ENCODE measurements at regions of chr11 and their contacts with region 1.

Region 1: GRCh38 chr11:2151500-2152257 is 9.3 kb downstream of the INS start:
- DNase-seq: no peak
- ATAC-seq: peak; percentile 77
- H3K4me3 ChIP-seq: no peak overlapping the region
- H3K27ac ChIP-seq: no peak overlapping the region
- H3K4me1 ChIP-seq: no peaks in the 10 kb centered on the region
- H3K27me3 ChIP-seq: no peaks in the 10 kb centered on the region; a peak in 1 of 4 replicates
- CTCF ChIP-seq: peak; percentile 73 to 82 (median 73)
- EP300 ChIP-seq: no peak
- POLR2A ChIP-seq: no peak
- RAD21 ChIP-seq: peak; percentile 80

Region 2: GRCh38 chr11:1694064-1694845 is 457.4 kb before region 1 on chr11:
- CTCF ChIA-PET with region 1: interaction called, 30 read pairs
- POLR2A ChIA-PET with region 1: no interaction called
- RAD21 ChIA-PET with region 1: interaction called, 23 read pairs
- SMC1A ChIA-PET with region 1: interaction called, 13 read pairs
- in situ Hi-C with region 1: loop called (anchors 5 kb)
- intact Hi-C with region 1: loop called (anchors 2 kb)
- DNase-seq: no peak
- ATAC-seq: peak; percentile 99
- H3K4me3 ChIP-seq: no peak overlapping the region
- H3K27ac ChIP-seq: no peak overlapping the region
- H3K4me1 ChIP-seq: no peaks in the 10 kb centered on the region
- H3K27me3 ChIP-seq: peaks cover 3 to 4% of the 10 kb centered on the region in 2 experiments; a peak in 2 of 4 replicates
- CTCF ChIP-seq: peak; percentile 80 to 94 (median 92); a peak in 5 of 6 replicates
- EP300 ChIP-seq: no peak
- POLR2A ChIP-seq: no peak
- RAD21 ChIP-seq: peak; percentile 89

Region 3: GRCh38 chr11:1832211-1832919 is 319.3 kb before region 1 on chr11:
- CTCF ChIA-PET with region 1: interaction called, 35 read pairs
- POLR2A ChIA-PET with region 1: no interaction called
- RAD21 ChIA-PET with region 1: interaction called, 7 read pairs
- SMC1A ChIA-PET with region 1: interaction called, 8 read pairs
- in situ Hi-C with region 1: no loop called
- intact Hi-C with region 1: loop called (anchors 1 kb)
- DNase-seq: no peak
- ATAC-seq: peak; percentile 81
- H3K4me3 ChIP-seq: no peak overlapping the region
- H3K27ac ChIP-seq: no peak overlapping the region
- H3K4me1 ChIP-seq: no peaks in the 10 kb centered on the region
- H3K27me3 ChIP-seq: no peaks in the 10 kb centered on the region; a peak in 2 of 4 replicates
- CTCF ChIP-seq: peak; percentile 76 to 95 (median 76)
- EP300 ChIP-seq: no peak
- POLR2A ChIP-seq: no peak
- RAD21 ChIP-seq: peak; percentile 68

Region 4: DNA sequence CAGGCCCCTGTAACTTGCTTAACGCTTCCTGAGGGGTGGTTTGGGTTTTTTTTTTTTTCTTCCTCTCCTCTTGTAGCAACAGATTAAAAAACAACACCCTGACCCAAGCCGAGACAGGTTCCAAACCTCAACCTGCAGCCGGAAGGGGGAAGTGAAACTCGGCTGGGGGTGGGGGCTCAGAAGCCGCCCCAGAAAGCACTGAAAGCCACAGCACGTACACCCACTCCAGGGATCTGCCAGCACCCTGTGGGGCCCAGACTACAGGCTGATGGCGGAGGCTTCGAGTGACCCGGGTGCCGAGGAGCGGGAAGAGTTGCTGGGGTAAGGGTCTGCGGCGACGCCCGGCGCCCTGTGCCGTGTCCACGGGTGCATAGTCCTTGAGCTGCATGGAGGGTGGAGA is 298.8 kb before region 1 on chr11 and contains the start of gene LSP1:
- CTCF ChIA-PET with region 1: interaction called, 15 read pairs
- POLR2A ChIA-PET with region 1: no interaction called
- RAD21 ChIA-PET with region 1: interaction called, 3 read pairs
- SMC1A ChIA-PET with region 1: interaction called, 5 read pairs
- in situ Hi-C with region 1: no loop called
- intact Hi-C with region 1: no loop called
- DNase-seq: peak; percentile 92
- ATAC-seq: peak; percentile 57
- H3K4me3 ChIP-seq: peak within 1 kb of the TSS; percentile 96
- H3K27ac ChIP-seq: peak within 1 kb of the TSS; percentile 99
- H3K4me1 ChIP-seq: peaks cover 60% of the 10 kb centered on the region
- H3K27me3 ChIP-seq: no peaks in the 10 kb centered on the region
- CTCF ChIP-seq: no peak
- EP300 ChIP-seq: peak; percentile 97 to 98
- POLR2A ChIP-seq: peak; percentile 89
- RAD21 ChIP-seq: peak; percentile 43; the same call in 1 of the 2 replicates
- polyA plus RNA-seq, gene LSP1: 19.2 to 34.2 TPM

Region 5: DNA sequence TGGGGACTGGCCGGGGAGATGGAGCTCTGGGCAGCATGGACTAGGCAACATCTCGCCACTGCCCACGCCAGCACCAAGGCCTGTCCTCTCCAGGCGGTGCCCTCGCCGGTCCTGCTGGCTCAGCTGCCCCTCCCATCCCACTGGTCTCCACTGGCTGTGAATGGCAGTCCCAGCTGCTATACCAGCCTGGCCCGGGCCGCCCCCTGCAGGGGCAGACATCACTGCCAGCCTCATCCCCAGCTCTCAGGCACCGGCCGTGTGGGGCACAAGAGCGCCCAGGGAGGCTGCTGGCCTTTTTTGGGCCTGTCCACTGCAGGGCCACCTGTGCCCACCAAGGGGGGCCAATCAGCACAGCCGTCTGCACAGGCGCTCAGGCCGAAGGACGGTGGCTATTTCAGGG is 124.0 kb before region 1 on chr11:
- CTCF ChIA-PET with region 1: interaction called, 10 read pairs
- POLR2A ChIA-PET with region 1: no interaction called
- RAD21 ChIA-PET with region 1: interaction called, 5 read pairs
- SMC1A ChIA-PET with region 1: no interaction called
- in situ Hi-C with region 1: no loop called
- intact Hi-C with region 1: no loop called
- DNase-seq: no peak
- ATAC-seq: no peak
- H3K4me3 ChIP-seq: no peak overlapping the region
- H3K27ac ChIP-seq: no peak overlapping the region
- H3K4me1 ChIP-seq: no peaks in the 10 kb centered on the region
- H3K27me3 ChIP-seq: no peaks in the 10 kb centered on the region
- CTCF ChIP-seq: no peak
- EP300 ChIP-seq: no peak
- POLR2A ChIP-seq: no peak
- RAD21 ChIP-seq: no peak

Region 6: DNA sequence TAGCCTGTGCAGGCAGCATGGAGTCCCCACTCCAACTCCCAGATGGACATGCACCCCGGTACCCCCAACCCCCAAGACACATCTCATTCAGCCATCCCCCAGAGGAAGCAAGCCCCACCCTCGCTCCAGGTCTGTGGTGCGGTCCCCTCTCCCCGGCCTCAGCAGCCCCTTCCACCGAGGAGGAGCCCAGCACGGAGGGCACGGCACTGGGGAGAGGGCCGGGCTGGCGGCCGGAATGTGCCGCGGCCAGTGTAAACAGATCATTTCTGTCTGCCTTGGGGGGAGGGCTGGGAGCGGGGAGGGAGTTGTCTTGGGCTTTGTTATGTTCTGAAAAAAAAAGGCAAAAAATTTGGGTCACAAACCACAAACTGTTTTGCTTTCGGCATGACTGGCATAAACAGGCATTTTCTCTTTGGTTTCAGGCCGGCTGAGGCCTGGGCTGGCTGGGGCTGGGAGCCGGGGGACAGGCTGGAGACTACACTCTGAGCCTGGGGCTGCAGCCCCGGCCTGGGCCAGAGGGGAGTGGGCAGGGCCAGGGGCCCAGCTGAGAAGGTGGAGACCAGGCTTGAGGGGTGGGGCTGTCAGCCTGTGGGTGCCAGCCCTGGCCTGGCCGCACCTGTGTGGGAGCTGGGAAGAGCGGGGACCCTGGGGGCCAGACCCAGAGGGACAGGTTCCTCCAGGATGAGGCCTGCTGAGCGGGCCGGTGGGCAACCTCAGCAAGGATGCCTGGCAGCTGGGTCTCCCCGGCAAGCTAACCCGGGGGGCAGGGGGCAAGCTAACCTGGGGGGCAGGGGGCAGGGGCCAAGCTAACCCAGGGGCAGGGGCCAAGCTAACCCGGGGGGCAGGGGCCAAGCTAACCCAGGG is 29.2 kb before region 1 on chr11:
- CTCF ChIA-PET with region 1: interaction called, 11 read pairs
- POLR2A ChIA-PET with region 1: no interaction called
- RAD21 ChIA-PET with region 1: no interaction called
- SMC1A ChIA-PET with region 1: no interaction called
- in situ Hi-C with region 1: no loop called
- intact Hi-C with region 1: no loop called
- DNase-seq: no peak
- ATAC-seq: no peak
- H3K4me3 ChIP-seq: no peak overlapping the region
- H3K27ac ChIP-seq: no peak overlapping the region
- H3K4me1 ChIP-seq: no peaks in the 10 kb centered on the region
- H3K27me3 ChIP-seq: no peaks in the 10 kb centered on the region; a peak in 1 of 4 replicates
- CTCF ChIP-seq: no peak
- EP300 ChIP-seq: no peak
- POLR2A ChIP-seq: no peak
- RAD21 ChIP-seq: no peak

Region 7: DNA sequence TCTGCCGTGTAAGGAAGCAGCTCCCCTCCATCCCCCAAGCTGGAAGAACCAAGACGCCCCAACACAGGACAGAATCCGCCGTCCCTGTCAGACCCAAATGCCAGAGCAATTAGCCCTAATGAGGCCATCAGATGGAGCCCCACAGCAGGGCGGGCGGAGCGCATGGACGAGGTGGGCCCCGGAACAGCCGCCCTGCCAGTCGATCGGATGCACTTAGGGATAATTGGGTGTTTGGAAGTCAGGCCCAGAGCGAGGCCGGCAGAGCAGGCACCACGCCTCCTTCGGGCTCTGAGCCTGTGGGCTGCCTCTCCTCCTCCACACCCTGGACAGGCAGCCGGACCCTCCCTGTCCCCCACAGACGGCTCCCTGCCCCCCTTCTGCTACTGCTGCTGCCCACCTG is 25.4 kb after region 1 on chr11:
- CTCF ChIA-PET with region 1: no interaction called
- POLR2A ChIA-PET with region 1: no interaction called
- RAD21 ChIA-PET with region 1: no interaction called
- SMC1A ChIA-PET with region 1: no interaction called
- in situ Hi-C with region 1: no loop called
- intact Hi-C with region 1: no loop called
- DNase-seq: no peak
- ATAC-seq: no peak
- H3K4me3 ChIP-seq: no peak overlapping the region
- H3K27ac ChIP-seq: no peak overlapping the region
- H3K4me1 ChIP-seq: no peaks in the 10 kb centered on the region
- H3K27me3 ChIP-seq: no peaks in the 10 kb centered on the region; a peak in 1 of 4 replicates
- CTCF ChIP-seq: no peak
- EP300 ChIP-seq: no peak
- POLR2A ChIP-seq: no peak
- RAD21 ChIP-seq: no peak

Region 8: GRCh38 chr11:2330696-2331095 is 179.0 kb after region 1 on chr11:
- CTCF ChIA-PET with region 1: no interaction called
- POLR2A ChIA-PET with region 1: no interaction called
- RAD21 ChIA-PET with region 1: no interaction called
- SMC1A ChIA-PET with region 1: no interaction called
- in situ Hi-C with region 1: no loop called
- intact Hi-C with region 1: no loop called
- DNase-seq: no peak
- ATAC-seq: no peak
- H3K4me3 ChIP-seq: no peak overlapping the region
- H3K27ac ChIP-seq: no peak overlapping the region
- H3K4me1 ChIP-seq: no peaks in the 10 kb centered on the region
- H3K27me3 ChIP-seq: no peaks in the 10 kb centered on the region
- CTCF ChIP-seq: no peak
- EP300 ChIP-seq: no peak
- POLR2A ChIP-seq: no peak
- RAD21 ChIP-seq: no peak

Measured in GM12878 (cell line).